ENCODE measurements at regions of chr17 and their contacts with region 1.

Region 1: DNA sequence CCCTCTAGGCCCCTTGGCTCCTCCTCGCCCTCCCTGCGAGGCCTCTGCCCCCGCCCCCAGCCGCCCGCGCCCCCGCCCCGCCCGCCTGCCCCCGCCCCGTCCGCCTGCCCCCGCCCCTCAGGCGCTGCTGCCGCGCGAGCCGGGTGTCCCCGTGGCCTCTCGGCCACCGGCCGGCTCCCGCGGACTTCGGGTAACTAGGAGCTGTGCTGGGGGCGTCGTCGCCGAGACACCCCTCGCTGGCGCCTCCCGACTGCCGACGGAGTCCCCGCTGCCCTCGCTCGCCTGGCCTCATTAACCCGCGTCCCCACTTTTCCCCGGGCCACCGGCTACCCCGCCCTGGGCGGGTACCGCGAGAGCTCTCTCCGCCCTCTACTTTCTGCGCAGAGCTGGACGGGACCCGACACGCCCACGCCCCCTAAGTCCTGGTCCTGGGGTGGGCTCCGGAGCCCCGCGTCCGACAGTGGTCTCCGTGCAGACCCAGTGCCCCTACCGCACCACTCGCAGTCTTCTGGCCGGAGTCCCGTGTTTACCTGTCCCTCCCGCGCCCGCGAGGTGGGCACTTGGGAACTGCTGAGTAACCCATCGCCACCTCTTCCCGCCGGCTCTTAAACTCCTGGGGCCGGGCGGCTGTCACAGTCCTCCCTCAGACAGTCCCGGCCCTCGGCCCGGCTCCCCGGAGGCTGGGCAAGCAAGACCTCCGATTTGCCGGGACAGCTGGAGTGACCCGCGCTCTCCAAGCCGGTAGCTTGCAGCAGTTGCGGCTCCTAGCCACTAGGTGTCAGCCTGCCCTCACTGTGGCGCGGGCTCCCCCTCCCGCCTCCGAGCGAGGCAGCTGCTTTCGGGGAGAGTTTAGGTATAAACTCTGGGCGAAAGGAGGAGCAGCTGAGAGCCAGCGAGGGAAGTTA is at the start of gene TLCD1:
- DNase-seq: peak; percentile 96
- H3K4me3 Mint-ChIP-seq: peak within 1 kb of the TSS; percentile 93
- H3K27ac Mint-ChIP-seq: peak within 1 kb of the TSS; percentile 98
- H3K4me1 Mint-ChIP-seq: peaks cover 47% of the 10 kb centered on the region
- H3K27me3 Mint-ChIP-seq: no peaks in the 10 kb centered on the region
- total RNA-seq, gene TLCD1: 9.1 to 9.5 TPM

Region 2: GRCh38 chr17:28612936-28613872 is 113.3 kb before region 1 on chr17:
- CTCF ChIA-PET with region 1: no interaction called
- POLR2A ChIA-PET with region 1: no interaction called
- intact Hi-C with region 1: no loop called
- DNase-seq: peak; percentile 32
- H3K4me3 Mint-ChIP-seq: no peak overlapping the region
- H3K27ac Mint-ChIP-seq: no peak overlapping the region
- H3K4me1 Mint-ChIP-seq: peaks cover 5% of the 10 kb centered on the region
- H3K27me3 Mint-ChIP-seq: no peaks in the 10 kb centered on the region

Region 3: GRCh38 chr17:28644985-28645939 is 81.2 kb before region 1 on chr17 and contains the start of gene BLTP2:
- CTCF ChIA-PET with region 1: interaction called, 20 read pairs
- POLR2A ChIA-PET with region 1: interaction called, 4 read pairs
- intact Hi-C with region 1: loop called (anchors 5 kb)
- DNase-seq: peak; percentile 97
- H3K4me3 Mint-ChIP-seq: peak within 1 kb of the TSS; percentile 83
- H3K27ac Mint-ChIP-seq: peak within 1 kb of the TSS; percentile 86
- H3K4me1 Mint-ChIP-seq: peaks cover 39% of the 10 kb centered on the region
- H3K27me3 Mint-ChIP-seq: no peaks in the 10 kb centered on the region
- total RNA-seq, gene BLTP2: 127 to 133 TPM

Region 4: DNA sequence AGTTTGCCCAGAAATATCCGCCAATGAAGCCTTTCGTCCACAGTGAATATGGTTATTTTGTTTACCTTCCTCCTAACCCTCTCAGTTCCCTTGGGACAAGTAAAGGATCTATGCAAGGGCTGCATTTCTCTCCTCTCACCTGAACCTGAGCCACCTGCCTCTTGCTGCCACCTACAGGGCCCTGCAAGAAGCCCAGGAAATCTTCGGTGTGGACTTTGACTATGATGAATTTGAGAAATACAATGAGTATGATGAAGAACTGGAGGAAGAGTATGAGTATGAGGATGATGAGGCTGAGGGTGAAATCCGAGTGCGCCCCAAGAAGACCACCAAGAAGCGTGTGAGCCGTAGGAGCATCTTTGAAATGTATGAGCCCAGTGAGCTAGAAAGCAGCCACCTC is 50.5 kb before region 1 on chr17:
- CTCF ChIA-PET with region 1: no interaction called
- POLR2A ChIA-PET with region 1: no interaction called
- intact Hi-C with region 1: no loop called
- DNase-seq: peak; percentile 20
- H3K4me3 Mint-ChIP-seq: no peak overlapping the region
- H3K27ac Mint-ChIP-seq: no peak overlapping the region
- H3K4me1 Mint-ChIP-seq: no peaks in the 10 kb centered on the region
- H3K27me3 Mint-ChIP-seq: no peaks in the 10 kb centered on the region

Region 5: GRCh38 chr17:28750178-28751047 is 23.9 kb after region 1 on chr17:
- CTCF ChIA-PET with region 1: interaction called, 632 read pairs
- POLR2A ChIA-PET with region 1: interaction called, 202 read pairs
- intact Hi-C with region 1: loop called (anchors 1 kb)
- DNase-seq: peak; percentile 94
- H3K4me3 Mint-ChIP-seq: no peak overlapping the region
- H3K27ac Mint-ChIP-seq: peak overlapping the region; percentile 42
- H3K4me1 Mint-ChIP-seq: peaks cover 26% of the 10 kb centered on the region
- H3K27me3 Mint-ChIP-seq: no peaks in the 10 kb centered on the region

Region 6: DNA sequence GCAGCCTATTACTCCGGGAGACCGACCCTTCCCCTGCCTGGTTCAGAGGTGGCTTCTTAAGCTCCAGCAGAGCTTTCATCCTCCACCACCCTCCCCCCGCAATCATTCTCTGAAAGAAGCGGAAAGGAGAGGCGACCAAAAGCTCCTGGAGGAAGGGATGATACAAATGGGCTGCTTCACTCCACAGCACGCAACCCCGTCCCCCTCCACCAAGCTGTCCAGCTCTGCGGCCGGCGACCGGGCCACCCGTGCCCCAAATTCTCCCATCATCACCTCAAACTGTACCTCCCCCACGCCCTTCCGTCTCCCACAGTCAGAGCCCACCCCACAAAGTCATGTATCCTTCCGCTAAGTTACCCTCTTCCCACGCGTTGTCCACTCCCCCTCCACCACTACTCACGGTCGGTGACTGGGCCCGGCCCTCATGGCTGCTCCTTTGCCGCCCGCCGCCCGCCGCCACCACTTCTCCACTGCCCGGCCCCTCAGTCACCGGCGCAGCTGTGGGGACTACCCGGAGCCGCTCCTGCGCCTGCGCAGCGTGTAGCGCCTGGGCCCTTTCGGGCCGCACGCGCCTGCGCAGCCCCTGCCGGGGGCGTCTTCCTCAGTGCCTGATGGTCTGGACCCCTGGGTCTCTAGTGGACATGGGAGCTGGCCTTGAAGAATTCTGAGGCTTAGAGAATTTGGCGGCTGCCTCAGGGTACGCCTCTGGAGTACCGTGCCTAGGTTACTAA is 116.0 kb after region 1 on chr17 and contains the start of gene FAM222B:
- CTCF ChIA-PET with region 1: interaction called, 23 read pairs
- POLR2A ChIA-PET with region 1: interaction called, 3 read pairs
- intact Hi-C with region 1: loop called (anchors 2 kb)
- DNase-seq: peak; percentile 91
- H3K4me3 Mint-ChIP-seq: peak within 1 kb of the TSS; percentile 95
- H3K27ac Mint-ChIP-seq: peak within 1 kb of the TSS; percentile 88
- H3K4me1 Mint-ChIP-seq: peaks cover 24% of the 10 kb centered on the region
- H3K27me3 Mint-ChIP-seq: no peaks in the 10 kb centered on the region
- total RNA-seq, gene FAM222B: 18.6 to 21.5 TPM

Region 7: DNA sequence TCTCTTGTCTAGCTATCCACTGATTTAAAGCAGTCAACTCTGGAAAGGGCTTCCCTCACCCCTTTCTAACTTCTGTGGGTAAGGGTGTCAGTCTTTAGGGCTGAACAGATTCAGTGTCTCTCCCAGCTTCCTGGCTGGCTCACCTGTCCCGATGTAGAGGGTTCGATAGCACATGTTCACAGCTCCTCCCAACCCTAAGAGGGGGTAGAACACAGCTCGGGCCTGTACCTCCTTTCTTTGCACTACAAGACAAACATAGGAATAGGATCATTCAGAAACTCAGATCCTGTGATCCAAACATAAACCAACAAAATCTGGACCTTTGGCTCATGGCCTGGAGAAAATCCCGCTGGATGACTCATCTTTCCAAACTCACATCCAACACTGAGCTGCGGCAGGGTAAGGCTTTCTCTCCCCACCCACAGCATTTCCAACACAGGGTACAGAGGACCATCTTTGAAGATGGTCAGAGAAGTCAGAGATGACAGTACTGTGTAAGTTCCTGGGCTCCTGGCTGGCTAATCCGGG is 182.2 kb after region 1 on chr17:
- CTCF ChIA-PET with region 1: interaction called, 36 read pairs
- POLR2A ChIA-PET with region 1: interaction called, 6 read pairs
- intact Hi-C with region 1: loop called (anchors 1 kb)
- DNase-seq: no peak
- H3K4me3 Mint-ChIP-seq: no peak overlapping the region
- H3K27ac Mint-ChIP-seq: no peak overlapping the region
- H3K4me1 Mint-ChIP-seq: no peaks in the 10 kb centered on the region
- H3K27me3 Mint-ChIP-seq: no peaks in the 10 kb centered on the region

Region 8: DNA sequence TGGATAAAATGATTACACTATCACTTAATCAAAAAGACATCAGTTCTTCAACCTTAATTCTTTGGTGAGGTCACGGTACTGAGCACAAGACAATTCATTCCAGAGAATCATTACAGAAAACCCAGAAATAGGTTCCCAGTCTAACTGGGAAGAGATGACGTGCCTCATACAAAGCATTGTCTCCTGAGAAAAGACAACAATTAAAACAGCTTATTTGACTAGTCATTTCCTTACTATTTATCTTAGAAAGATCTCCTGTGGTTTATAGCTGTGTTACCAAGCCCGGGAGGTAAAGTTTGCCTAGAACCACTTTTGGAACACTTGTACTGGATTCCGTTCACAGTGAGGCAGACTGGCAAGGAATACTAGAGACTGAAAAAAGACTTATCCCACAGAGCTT is 219.8 kb after region 1 on chr17:
- CTCF ChIA-PET with region 1: interaction called, 130 read pairs
- POLR2A ChIA-PET with region 1: interaction called, 29 read pairs
- intact Hi-C with region 1: loop called (anchors 1 kb)
- DNase-seq: no peak
- H3K4me3 Mint-ChIP-seq: peak overlapping the region; percentile 36
- H3K27ac Mint-ChIP-seq: peak overlapping the region; percentile 68
- H3K4me1 Mint-ChIP-seq: peaks cover 68% of the 10 kb centered on the region
- H3K27me3 Mint-ChIP-seq: no peaks in the 10 kb centered on the region

Region 9: GRCh38 chr17:29140051-29140621 is 413.7 kb after region 1 on chr17:
- CTCF ChIA-PET with region 1: interaction called, 3 read pairs
- POLR2A ChIA-PET with region 1: no interaction called
- intact Hi-C with region 1: loop called (anchors 5 kb)
- DNase-seq: peak; percentile 93
- H3K4me3 Mint-ChIP-seq: peak overlapping the region; percentile 93
- H3K27ac Mint-ChIP-seq: peak overlapping the region; percentile 97
- H3K4me1 Mint-ChIP-seq: peaks cover 69% of the 10 kb centered on the region
- H3K27me3 Mint-ChIP-seq: no peaks in the 10 kb centered on the region

Measured in activated CD4-positive, alpha-beta memory T cell treated with anti-CD3 and anti-CD28 coated beads for 36 hours (primary cell).